Left cardiac atrium (tissue), 4 donors: ENCODE measurements at regions of chr6 and their contacts with region 1.

Region 1: GRCh38 chr6:144582939-144583613 is 297.9 kb downstream of the UTRN start:
- DNase-seq: peak; percentile 23
- ATAC-seq: peak; percentile 61 to 82

Region 2: DNA sequence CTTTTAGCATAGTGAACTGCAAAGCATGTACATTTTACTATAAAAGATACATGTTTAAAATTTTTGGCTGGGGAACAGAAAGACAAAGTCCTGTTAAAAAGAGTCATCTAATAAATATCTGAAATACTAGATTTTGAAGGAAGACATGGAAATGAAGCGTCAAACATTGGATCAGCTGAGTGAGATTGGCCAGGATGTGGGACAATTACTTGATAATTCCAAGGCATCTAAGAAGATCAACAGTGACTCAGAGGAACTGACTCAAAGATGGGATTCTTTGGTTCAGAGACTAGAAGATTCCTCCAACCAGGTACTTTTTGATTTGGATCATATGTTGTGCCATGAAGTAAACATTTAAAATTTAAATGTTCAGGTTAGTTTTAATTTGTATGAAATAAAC is 135.6 kb before region 1 on chr6:
- intact Hi-C with region 1: no loop called
- DNase-seq: no peak
- ATAC-seq: no peak

Region 3: DNA sequence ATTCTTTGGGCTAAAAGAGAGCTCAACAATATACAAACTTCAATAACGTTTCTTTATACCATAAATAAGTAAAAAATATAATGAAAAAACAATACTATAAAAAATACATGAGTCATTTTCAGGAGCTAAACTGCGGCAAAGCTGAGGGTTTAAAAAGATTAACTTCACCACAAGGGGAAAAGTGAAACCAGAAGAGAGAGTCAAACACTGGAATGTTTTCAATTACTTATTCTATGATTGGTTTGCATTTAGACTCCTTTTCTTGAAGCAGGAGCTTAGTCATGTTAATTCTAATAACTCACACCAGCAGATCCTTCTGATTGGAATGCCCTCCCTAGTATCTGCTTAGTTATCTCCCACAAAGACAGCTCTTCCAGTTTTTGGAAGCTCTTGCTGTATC is 329.4 kb after region 1 on chr6:
- intact Hi-C with region 1: no loop called
- DNase-seq: no peak
- ATAC-seq: no peak

Region 4: GRCh38 chr6:145028144-145028818 is 445.2 kb after region 1 on chr6:
- intact Hi-C with region 1: loop called in 1 of 2 experiments (anchors 10 kb)
- DNase-seq: no peak
- ATAC-seq: no peak

Region 5: GRCh38 chr6:145214570-145214969 is 631.5 kb after region 1 on chr6:
- intact Hi-C with region 1: loop called in 1 of 2 experiments (anchors 2 kb)
- DNase-seq: no peak
- ATAC-seq: no peak

Region 6: DNA sequence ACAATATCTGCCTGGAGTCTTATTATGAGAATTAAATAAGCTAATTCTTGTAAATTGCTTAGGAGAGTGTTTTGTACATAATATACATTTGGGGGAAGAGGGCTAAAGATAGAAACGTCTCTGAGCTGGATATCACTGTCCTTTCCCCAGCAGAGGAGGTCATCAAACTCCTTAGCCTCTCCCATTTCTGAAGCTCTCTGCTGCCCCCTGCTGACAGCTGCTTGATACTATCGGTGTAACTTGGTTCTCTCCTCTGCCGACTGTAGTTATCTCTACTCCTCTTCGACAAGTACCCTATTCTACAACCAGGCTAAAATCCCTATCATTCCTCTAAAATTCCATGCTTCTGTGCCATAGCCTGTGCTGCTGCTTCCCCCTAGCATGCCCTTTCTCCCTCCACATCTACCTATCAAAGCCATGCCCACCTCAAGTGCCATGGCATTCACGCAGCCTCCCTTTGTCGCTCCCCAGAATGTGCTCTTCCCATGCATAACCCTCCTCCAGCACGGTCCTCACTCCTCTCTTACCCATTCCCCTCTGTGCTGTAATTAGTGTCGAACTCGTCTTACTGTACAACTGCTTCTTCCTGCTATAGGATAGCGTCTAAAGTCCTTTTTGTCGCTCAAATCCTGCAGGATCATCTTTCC is 1051.0 kb after region 1 on chr6:
- intact Hi-C with region 1: loop called in 1 of 2 experiments (anchors 5 kb)
- DNase-seq: peak; percentile 84
- ATAC-seq: peak; percentile 88 to 93